ENCODE measurements at regions of chr3 and their contacts with region 1.

Region 1: GRCh38 chr3:94011233-94011711 is 17.1 kb downstream of the STX19 start:
- DNase-seq: no peak
- H3K4me3 Mint-ChIP-seq: peak overlapping the region; percentile 48
- H3K27ac Mint-ChIP-seq: peak overlapping the region; percentile 88
- H3K4me1 Mint-ChIP-seq: peaks cover 66% of the 10 kb centered on the region
- H3K27me3 Mint-ChIP-seq: no peaks in the 10 kb centered on the region

Region 2: DNA sequence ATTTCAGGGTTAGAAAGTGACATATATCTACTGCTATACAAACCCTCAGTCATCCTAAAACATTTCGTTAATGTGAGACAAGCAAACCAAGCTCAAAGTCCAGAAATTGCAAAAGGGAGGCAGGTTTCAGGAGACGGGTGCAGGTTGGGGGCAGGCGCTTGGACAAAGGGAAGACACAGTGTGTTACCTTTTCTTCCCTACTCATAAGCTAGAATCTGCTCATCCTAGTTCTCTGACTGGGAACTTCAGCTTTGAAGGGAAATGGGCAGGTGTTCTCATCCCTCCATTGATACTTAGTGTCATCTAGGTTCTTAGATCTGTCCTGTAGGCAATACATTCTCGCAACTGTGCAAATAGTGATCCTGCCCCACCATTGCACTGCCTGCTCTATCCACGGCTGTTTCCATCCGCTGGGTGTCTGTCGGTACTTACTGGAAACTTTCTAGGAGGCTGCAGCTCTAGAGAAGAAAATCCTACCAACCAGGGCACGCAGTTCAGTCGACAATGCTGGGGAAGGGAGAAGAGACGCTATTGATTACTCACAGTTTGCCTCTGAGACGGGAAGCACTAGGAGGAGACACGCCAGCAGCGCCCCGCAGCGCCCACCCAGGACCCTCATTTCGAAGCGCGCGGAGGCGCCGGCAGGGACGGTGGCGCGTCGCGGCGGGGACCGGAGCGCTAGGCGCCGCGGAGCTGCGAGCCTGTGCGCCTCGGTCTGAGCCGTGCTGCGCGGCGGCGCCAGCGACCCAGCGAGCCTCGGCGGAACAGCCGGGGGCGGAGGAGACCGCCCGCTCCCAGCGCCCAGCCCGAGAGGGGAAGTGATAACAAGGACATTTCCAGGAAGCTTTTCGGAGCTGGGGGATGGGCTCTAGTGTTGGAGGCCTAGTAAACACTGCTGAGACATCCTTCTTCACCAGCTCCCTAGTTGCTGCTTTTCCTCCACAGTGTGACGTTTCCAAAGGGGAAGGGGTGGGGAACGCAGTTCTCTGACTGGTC is 37.8 kb before region 1 on chr3 and contains the start of gene PROS1:
- intact Hi-C with region 1: loop called (anchors 2 kb)
- DNase-seq: peak; percentile 31
- H3K4me3 Mint-ChIP-seq: peak within 1 kb of the TSS; percentile 77
- H3K27ac Mint-ChIP-seq: peak within 1 kb of the TSS; percentile 62
- H3K4me1 Mint-ChIP-seq: peaks cover 9% of the 10 kb centered on the region
- H3K27me3 Mint-ChIP-seq: peaks cover 15% of the 10 kb centered on the region
- total RNA-seq, gene PROS1: 1.7 and 2.3 TPM in 2 replicates

Region 3: DNA sequence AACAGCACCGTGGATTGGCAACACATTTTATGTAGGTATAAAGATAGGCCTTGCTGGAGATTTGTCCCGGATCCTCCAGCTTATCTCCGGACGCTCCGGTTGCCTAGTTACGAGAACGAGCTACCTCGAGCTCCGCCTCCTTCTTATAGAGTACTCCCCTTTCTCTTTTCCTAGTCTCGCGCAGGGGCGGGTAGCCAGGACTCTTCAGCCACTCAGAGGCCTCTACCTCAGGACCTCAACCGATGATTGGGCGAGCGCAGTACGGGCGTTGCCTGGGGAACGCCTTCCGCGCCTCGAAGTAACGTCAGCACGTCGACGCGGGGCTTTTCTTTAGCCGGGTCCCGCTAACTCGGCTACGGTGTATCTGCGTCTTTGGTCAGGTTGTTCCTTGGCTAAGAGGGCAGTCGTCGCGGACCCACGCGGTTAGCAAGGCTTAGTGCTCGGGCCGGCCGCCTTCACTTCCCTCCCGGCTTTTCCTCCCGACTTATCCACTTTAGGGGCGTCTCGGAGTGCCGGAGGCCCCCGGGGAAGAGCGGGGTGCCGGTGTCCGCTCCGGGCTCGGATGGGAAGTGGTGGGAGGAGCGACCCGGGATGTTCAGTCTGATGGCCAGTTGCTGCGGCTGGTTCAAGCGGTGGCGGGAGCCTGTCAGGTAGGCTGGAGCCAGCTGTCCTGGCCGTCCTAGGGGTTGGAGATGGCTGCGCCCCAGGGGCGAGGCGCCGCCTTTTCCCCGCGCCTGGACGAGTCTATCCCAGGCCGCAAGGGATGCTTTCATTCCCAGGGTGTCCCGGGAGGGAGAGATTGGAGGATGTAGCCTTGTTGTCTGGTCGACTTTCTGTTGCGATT is 31.2 kb before region 1 on chr3 and contains the start of gene ARL13B:
- intact Hi-C with region 1: loop called (anchors 1 kb)
- DNase-seq: peak; percentile 93
- H3K4me3 Mint-ChIP-seq: peak within 1 kb of the TSS; percentile 87
- H3K27ac Mint-ChIP-seq: peak within 1 kb of the TSS; percentile 65
- H3K4me1 Mint-ChIP-seq: peaks cover 16% of the 10 kb centered on the region
- H3K27me3 Mint-ChIP-seq: peaks cover 4% of the 10 kb centered on the region
- total RNA-seq, gene ARL13B: 13.4 and 17.4 TPM in 2 replicates

Region 4: DNA sequence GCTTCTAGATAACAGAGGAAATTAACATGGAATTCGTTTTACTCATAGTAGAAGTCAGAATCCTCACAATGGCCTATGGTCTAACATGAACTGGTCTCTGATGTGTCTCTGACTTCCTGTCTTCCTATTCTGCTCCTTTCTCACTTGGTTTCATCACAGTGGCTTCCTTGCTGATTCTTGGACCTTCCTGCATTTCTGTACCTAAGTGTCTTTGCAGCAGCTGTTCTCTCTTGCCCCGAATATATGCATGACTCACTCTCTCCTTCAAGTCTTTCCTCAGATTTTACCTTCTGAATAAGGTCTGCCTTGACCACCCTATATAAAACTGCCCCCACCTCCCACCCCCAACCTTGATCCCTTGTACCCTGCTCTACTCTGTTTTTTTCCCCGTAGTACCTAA is 17.2 kb before region 1 on chr3:
- intact Hi-C with region 1: no loop called
- DNase-seq: no peak
- H3K4me3 Mint-ChIP-seq: no peak overlapping the region
- H3K27ac Mint-ChIP-seq: no peak overlapping the region
- H3K4me1 Mint-ChIP-seq: peaks cover 2% of the 10 kb centered on the region
- H3K27me3 Mint-ChIP-seq: no peaks in the 10 kb centered on the region

Region 5: GRCh38 chr3:94036909-94037507 is 25.7 kb after region 1 on chr3:
- intact Hi-C with region 1: loop called (anchors 2 kb)
- DNase-seq: no peak
- H3K4me3 Mint-ChIP-seq: no peak overlapping the region
- H3K27ac Mint-ChIP-seq: no peak overlapping the region
- H3K4me1 Mint-ChIP-seq: no peaks in the 10 kb centered on the region
- H3K27me3 Mint-ChIP-seq: no peaks in the 10 kb centered on the region

Region 6: GRCh38 chr3:94062431-94063404 is 51.4 kb after region 1 on chr3 and contains the starts of genes DHFR2 and NSUN3:
- intact Hi-C with region 1: loop called (anchors 1 kb)
- DNase-seq: peak; percentile 83
- H3K4me3 Mint-ChIP-seq: peak within 1 kb of the TSS; percentile 97
- H3K27ac Mint-ChIP-seq: peak within 1 kb of the TSS; percentile 98
- H3K4me1 Mint-ChIP-seq: peaks cover 42% of the 10 kb centered on the region
- H3K27me3 Mint-ChIP-seq: no peaks in the 10 kb centered on the region
- total RNA-seq, gene DHFR2: 10.0 and 11.1 TPM in 2 replicates
- total RNA-seq, gene NSUN3: 20.4 and 21.4 TPM in 2 replicates

Region 7: DNA sequence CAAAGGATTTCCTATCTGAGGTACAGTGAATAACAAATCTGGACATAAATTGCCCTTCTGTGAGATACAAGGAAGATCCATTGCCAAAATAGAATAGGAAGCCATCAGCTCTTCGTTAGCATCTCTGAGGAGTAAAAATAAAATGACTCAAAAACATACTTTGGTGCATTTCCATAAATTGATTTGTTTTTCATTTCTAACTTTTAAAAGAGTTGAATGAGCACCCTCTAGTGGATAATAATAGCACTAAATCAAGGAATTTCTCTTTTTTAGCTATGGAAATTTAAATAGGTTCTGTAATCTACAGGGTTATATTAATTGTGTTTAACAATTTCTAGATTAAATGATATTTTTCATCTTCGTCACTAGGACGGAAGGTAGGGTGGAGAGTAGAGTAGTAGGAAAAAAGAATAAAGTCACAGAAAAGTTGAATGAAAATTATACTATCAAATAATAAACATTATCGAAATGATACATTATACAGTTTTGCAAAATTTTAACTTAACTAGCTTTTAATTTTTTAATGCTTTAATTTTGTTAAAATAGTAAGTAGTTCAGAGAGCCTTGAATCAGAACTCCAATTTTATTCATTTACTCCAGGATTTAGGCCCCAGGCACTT is 58.0 kb after region 1 on chr3:
- intact Hi-C with region 1: loop called (anchors 1 kb)
- DNase-seq: no peak
- H3K4me3 Mint-ChIP-seq: no peak overlapping the region
- H3K27ac Mint-ChIP-seq: no peak overlapping the region
- H3K4me1 Mint-ChIP-seq: peaks cover 64% of the 10 kb centered on the region
- H3K27me3 Mint-ChIP-seq: no peaks in the 10 kb centered on the region

Region 8: GRCh38 chr3:94098452-94098851 is 87.2 kb after region 1 on chr3:
- intact Hi-C with region 1: no loop called
- DNase-seq: no peak
- H3K4me3 Mint-ChIP-seq: no peak overlapping the region
- H3K27ac Mint-ChIP-seq: no peak overlapping the region
- H3K4me1 Mint-ChIP-seq: peaks cover 10% of the 10 kb centered on the region
- H3K27me3 Mint-ChIP-seq: no peaks in the 10 kb centered on the region

Region 9: DNA sequence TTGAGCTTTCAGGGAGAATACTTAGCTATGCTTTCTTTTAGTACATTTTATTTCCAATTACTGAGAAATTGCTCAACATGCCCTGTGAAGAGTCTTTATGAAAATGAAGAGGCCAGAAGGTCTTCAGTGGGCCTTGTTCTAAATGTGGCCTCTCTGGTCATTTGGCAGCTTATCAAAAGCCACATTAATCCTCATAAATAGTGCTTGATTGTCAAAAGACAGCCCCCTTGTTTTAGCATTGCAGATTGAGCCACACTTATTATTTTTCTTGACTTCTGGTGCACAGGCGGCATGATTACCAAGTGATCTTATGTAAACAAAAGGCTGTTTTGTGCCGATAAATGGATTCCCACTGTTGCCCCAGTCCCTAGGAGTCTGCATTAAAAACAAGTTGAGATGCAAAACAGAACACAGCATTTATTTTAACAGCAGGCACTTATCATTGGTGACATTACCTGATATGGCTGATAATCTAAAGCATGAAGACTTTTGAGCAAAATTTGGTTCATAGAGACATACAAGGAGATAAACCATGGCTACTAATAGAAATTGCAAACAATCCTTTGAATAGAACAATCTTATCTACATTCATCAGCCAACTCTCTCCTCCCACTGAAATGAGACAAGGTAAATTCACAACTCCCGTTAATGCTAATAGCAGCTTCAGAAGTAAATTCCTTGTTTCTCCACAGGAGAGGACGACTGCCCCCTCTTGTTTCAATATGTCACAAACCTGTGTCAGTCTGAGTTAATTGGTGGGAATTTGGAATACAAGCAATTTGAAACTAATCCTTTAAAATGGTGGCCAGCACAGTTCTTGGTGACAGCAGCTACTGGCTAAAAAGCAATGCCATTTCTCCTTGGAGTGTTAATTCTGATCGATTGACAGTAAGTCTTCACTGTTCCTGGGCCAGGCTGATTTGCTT is 245.9 kb after region 1 on chr3:
- intact Hi-C with region 1: no loop called
- DNase-seq: no peak
- H3K4me3 Mint-ChIP-seq: no peak overlapping the region
- H3K27ac Mint-ChIP-seq: no peak overlapping the region
- H3K4me1 Mint-ChIP-seq: no peaks in the 10 kb centered on the region
- H3K27me3 Mint-ChIP-seq: no peaks in the 10 kb centered on the region

Measured in activated T-helper 2 cell treated with anti-CD3 and anti-CD28 coated beads, Interferon-gamma antibody, Interleukin-2, Interleukin-4, amounts not matched to agents 10 μg/mL and 5 μg/mL and 100 μg/mL, durations not matched to agents 14 hours and 24 hours and 36 hours (primary cell).